ENCODE measurements at regions of chr4 and their contacts with region 1.

Region 1: GRCh38 chr4:8274765-8275547 is 5.4 kb downstream of the HTRA3 start:
- DNase-seq: peak; percentile 91 to 95
- ATAC-seq: peak; percentile 76
- H3K4me3 ChIP-seq: no peak overlapping the region
- H3K27ac ChIP-seq: no peak overlapping the region
- H3K4me1 ChIP-seq: no peaks in the 10 kb centered on the region
- H3K27me3 ChIP-seq: no peaks in the 10 kb centered on the region

Region 2: GRCh38 chr4:8315435-8316250 is 40.7 kb after region 1 on chr4:
- intact Hi-C with region 1: loop called in 1 of 2 experiments (anchors 5 kb)
- DNase-seq: peak; percentile 74 to 75
- ATAC-seq: peak; percentile 65
- H3K4me3 ChIP-seq: no peak overlapping the region
- H3K27ac ChIP-seq: no peak overlapping the region
- H3K4me1 ChIP-seq: no peaks in the 10 kb centered on the region
- H3K27me3 ChIP-seq: no peaks in the 10 kb centered on the region

Measured in aorta (tissue), 5 donors.